ENCODE measurements at regions of chr20 and their contacts with region 1.

Region 1: DNA sequence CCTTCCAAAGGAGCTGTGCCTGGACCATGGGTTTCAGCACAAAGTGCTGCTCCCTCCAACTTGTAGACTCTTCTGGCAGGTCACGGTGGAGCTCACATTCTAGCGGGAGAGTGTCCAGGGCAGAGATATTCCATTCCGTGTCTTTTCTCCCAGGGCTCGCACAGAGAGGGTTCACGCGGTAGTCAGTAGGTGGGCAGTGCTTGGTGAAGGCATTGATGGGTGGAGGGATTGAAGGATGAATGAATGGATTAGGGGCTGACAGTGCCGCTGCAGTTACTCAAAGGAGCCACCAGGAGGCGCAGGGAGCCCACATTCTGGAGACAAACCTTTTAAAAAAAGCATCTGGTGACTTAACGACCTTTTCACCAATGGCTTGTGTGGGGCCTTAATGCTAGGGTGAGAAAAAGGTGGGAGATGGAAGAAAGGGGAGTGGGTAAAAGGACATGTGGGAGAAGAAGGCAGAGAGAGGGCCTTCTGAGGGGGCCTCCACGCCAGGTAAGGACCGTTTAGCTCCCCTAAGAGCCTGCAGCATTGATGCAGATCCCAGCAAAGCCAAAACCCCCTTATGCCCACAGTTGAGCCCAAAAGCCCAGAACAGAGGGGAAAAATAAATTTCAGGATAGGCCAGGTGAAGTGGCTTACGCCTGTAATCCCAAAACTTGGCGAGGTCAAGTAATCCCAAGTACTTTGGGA is 17.5 kb upstream of the FAM110A start:
- DNase-seq: peak; percentile 44 to 81 (median 72)
- ATAC-seq: peak; percentile 79
- H3K4me3 ChIP-seq: no peak overlapping the region
- H3K4me3 Mint-ChIP-seq: no peak overlapping the region
- H3K27ac ChIP-seq: no peak overlapping the region
- H3K27ac Mint-ChIP-seq: no peak overlapping the region
- H3K4me1 ChIP-seq: peaks cover 3% of the 10 kb centered on the region
- H3K4me1 Mint-ChIP-seq: peaks cover 5% of the 10 kb centered on the region
- H3K27me3 ChIP-seq: no peaks in the 10 kb centered on the region
- H3K27me3 Mint-ChIP-seq: peaks cover 19% of the 10 kb centered on the region
- CTCF ChIP-seq: peak; percentile 93

Region 2: GRCh38 chr20:844473-845225 is 28.6 kb after region 1 on chr20:
- CTCF ChIA-PET with region 1: interaction called, 8 read pairs
- POLR2A ChIA-PET with region 1: no interaction called
- intact Hi-C with region 1: loop called in 1 of 2 experiments (anchors 1 kb)
- DNase-seq: peak; percentile 81 to 97 (median 90)
- ATAC-seq: peak; percentile 94
- H3K4me3 ChIP-seq: peak overlapping the region; percentile 65 to 71
- H3K4me3 Mint-ChIP-seq: peak overlapping the region; percentile 94
- H3K27ac ChIP-seq: peak overlapping the region; percentile 26 to 48
- H3K27ac Mint-ChIP-seq: peak overlapping the region; percentile 84
- H3K4me1 ChIP-seq: peaks cover 52% of the 10 kb centered on the region
- H3K4me1 Mint-ChIP-seq: peaks cover 54% of the 10 kb centered on the region
- H3K27me3 ChIP-seq: no peaks in the 10 kb centered on the region
- H3K27me3 Mint-ChIP-seq: no peaks in the 10 kb centered on the region
- CTCF ChIP-seq: no peak

Region 3: DNA sequence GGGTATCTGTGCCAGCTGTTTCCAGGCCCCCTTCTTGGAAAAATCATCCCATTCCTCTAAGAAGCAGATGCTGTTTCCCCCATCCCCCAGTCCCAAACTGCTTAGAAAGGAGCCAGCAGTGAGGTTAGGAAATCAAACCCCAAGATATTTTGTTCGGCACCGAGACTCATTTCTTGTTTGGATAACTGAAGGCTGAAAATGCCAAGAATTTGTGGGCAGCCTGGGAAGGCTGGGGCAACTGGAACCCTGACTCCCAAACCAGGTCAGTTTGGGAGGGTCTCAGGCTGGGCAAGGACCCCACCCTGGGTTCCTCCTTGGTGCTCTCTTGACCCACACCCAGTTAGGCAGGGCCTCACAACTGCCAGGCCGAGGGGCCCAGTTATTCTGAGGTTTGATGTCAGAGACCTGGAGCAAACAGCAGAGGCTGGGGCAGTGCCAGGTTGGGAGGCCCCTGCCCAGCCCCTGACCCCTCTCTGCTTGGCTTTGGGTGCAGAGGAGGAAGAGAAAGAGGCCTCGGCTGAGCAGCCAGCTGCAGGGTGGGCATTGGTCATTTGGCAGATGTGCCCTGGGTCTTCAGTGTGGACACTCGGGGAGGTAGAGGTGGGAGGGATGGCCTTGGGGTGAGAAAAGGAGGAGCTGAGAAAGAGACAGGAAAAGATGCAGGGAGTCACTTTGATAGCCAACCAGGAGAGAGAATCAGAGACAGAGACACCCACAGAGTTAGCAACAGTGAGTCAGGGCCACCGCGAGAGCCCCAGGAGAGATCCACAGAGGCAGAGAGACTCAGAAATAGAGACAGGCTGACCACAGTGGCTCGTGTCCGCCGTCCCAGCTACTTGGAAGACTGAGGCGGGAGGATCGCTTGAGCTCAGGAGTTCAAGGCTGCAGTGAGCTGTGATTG is 95.1 kb after region 1 on chr20:
- CTCF ChIA-PET with region 1: interaction called, 4 read pairs
- POLR2A ChIA-PET with region 1: no interaction called
- intact Hi-C with region 1: loop called in 1 of 2 experiments (anchors 5 kb)
- DNase-seq: no peak
- ATAC-seq: no peak
- H3K4me3 ChIP-seq: no peak overlapping the region
- H3K4me3 Mint-ChIP-seq: no peak overlapping the region
- H3K27ac ChIP-seq: no peak overlapping the region
- H3K27ac Mint-ChIP-seq: no peak overlapping the region
- H3K4me1 ChIP-seq: no peaks in the 10 kb centered on the region
- H3K4me1 Mint-ChIP-seq: no peaks in the 10 kb centered on the region
- H3K27me3 ChIP-seq: no peaks in the 10 kb centered on the region
- H3K27me3 Mint-ChIP-seq: peaks cover 13% of the 10 kb centered on the region
- CTCF ChIP-seq: no peak

Region 4: GRCh38 chr20:1108437-1108920 is 292.4 kb after region 1 on chr20:
- CTCF ChIA-PET with region 1: interaction called, 8 read pairs
- POLR2A ChIA-PET with region 1: no interaction called
- intact Hi-C with region 1: loop called in 1 of 2 experiments (anchors 1 kb)
- DNase-seq: peak; percentile 22 to 70 (median 52)
- ATAC-seq: peak; percentile 82
- H3K4me3 ChIP-seq: no peak overlapping the region
- H3K4me3 Mint-ChIP-seq: no peak overlapping the region
- H3K27ac ChIP-seq: no peak overlapping the region
- H3K27ac Mint-ChIP-seq: no peak overlapping the region
- H3K4me1 ChIP-seq: no peaks in the 10 kb centered on the region
- H3K4me1 Mint-ChIP-seq: peaks cover 4% of the 10 kb centered on the region
- H3K27me3 ChIP-seq: no peaks in the 10 kb centered on the region
- H3K27me3 Mint-ChIP-seq: no peaks in the 10 kb centered on the region
- CTCF ChIP-seq: peak; percentile 62

Measured in CD8-positive, alpha-beta T cell (primary cell).